Left cardiac atrium (tissue), 4 donors: ENCODE measurements at regions of chr5 and their contacts with region 1.

Region 1: DNA sequence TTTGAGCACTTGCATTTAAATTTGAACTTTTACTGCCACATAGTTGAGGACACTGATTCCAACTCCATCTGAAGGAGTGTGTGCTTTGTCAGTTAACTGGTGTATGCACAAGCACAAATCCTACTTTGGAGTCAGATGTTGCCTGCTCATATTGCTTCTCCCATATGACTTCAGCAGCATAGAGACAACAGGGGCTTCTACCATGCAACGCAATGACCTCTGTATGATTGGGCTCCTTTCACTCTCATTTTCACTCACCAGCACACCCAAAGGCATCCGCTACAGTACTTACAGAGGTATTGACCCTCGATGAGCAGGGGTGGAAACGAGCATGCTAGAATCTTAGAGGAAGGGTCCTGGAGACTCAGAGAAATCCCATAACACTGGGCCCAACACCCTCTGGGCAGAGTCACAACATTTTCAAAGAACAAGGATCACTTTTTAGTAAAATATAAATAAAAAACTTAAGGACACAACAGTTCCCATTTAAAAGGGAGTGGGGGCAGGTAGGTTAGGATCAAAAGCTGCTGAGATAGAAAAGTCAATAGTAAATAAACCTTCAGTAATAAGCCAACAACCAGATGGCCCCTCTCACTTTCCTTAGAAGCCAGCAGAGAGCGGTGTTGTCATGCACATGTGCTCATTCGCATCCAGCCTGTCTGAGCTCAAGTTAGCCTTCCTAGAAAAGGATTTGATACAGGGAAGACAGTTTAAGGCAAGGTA is 203.8 kb downstream of the SNCAIP start:
- DNase-seq: peak; percentile 41
- ATAC-seq: peak; percentile 92

Region 2: DNA sequence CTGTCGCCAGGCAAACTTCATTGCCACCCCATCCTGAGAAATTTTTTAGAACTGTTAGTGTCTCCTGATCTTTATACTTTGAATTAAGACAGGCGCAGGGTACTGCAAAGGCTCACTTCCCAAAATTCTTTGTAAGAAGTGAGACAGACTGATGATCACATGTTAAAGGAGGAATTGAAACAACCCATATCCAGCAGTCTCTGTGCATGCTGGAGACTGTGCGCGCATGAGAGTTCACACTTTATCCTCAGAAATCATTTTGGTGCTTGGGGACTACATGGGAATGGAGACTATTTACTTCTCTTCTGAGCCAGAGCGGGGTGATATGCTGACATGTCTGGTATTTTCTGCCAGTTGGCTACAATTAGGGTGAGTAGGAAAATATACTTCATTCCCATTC is 295.4 kb before region 1 on chr5:
- intact Hi-C with region 1: no loop called
- DNase-seq: no peak
- ATAC-seq: peak; percentile 84 to 86

Region 3: GRCh38 chr5:123371575-123372179 is 855.8 kb after region 1 on chr5:
- intact Hi-C with region 1: loop called in 1 of 2 experiments (anchors 5 kb)
- DNase-seq: peak; percentile 55
- ATAC-seq: no peak